Left colon (tissue), 2 donors: ENCODE measurements at regions of chr5 and their contacts with region 1.

Region 1: GRCh38 chr5:172932313-172933017 is 26.8 kb upstream of the RPL26L1 start:
- DNase-seq: peak; percentile 58 to 79
- ATAC-seq: peak; percentile 94

Region 2: GRCh38 chr5:171427318-171428167 is 1504.9 kb before region 1 on chr5:
- intact Hi-C with region 1: no loop called
- DNase-seq: no peak
- ATAC-seq: no peak

Region 3: DNA sequence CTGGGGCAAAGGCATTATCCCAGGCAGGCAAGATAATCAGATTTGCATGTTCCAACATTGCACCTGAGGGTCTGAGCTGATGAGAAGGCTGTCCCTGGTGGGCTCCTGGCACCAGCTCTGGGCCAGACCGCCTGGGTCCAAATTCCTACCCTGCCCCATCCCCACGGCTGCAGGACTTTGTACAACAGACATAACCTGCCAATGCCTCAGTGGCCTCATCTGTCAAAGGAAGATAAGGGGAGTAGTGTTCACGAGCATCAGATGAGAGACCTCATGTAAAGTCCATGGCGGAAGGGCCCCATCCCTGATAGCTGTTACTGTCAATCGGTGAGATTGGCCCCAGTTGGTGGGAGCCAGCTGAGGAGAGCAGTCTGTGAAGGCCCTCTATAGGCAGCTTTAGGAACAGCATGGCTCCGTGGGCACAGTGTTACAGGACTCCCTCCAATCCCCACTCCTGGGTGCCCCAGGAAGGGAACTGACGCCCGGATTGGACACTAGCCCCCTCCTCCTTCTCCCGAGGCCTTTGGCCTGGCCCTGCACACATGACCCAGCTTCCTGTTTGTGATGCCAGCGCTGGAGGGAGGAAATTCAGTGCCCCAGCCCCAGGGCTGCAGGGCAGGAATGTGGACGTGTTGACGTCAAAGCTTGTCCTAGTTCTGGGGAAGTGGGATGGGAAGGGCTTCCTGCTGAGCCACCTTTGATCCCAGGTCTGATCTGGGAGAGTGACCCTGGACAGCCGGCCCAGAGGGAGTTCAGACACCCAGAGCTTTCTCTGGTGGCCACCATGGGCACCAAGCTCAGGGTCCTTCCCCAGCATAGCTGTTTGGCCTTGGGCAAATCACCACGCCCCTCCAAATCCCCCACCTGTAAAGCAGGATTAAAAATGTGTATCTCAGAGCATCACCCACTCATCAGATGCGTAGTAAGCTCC is 217.7 kb before region 1 on chr5:
- intact Hi-C with region 1: loop called (anchors 5 kb)
- DNase-seq: peak; percentile 77 to 81
- ATAC-seq: peak; percentile 76

Region 4: GRCh38 chr5:173315495-173316350 is 383.3 kb after region 1 on chr5:
- intact Hi-C with region 1: no loop called
- DNase-seq: no peak
- ATAC-seq: peak; percentile 24

Region 5: DNA sequence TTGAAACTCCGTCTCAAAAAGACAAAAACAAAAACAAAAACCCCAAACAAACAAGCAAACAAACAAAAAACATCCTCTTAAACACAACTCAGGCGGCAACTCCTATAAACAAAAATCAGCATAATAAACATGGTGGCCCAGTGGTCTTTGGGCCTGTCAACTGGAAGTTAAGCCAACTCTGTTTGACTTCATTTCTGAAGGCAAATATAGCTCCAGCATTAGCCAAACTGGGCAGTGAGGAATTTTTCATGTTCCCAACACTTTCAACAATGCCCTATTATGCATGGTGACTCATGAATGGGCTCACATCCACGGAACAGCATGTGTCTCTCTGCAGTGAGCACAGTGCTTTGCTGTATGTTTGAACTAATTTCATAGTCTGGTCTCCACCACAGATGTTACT is 539.7 kb after region 1 on chr5:
- intact Hi-C with region 1: no loop called
- DNase-seq: peak; percentile 6 to 37
- ATAC-seq: no peak